ENCODE measurements at regions of chr16 and their contacts with region 1.

Region 1: DNA sequence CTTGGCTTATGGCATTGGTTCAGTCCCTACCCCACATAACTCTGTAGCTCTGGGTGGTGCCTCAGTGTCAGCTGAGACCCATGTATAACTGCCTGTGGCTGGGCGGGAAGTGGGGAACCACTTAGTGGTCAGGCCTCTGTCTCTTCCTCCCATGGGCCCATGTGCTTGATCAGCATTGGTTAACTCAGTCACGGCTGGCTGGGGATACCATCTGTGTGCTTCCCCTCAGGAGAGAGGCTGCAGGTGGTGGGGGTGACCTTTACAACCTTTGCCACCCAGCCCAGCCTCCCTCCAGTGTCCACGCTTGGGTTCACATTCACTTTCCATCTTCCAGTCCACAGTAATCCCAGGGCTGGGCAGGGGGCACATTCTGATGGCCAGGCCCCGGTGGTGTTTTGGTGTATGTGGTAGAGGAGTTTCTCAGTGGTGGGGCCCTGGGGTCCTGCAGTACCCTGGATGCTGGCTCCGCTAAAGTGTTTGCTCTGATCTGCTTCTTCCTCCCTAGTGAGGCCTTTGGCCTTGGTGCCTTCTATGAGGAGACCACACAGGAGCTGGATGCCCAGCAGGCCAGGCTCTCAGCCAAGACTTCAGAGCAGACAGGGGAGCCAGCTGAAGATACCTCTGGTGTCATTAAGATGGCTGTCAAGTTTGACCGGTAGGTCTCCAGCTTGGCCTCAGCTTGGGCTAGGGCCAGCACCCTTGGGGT is 10.2 kb upstream of the NFATC3 start:
- DNase-seq: peak; percentile 93
- ATAC-seq: peak; percentile 86
- H3K4me3 ChIP-seq: peak overlapping the region in 4 of 5 experiments; percentile 11 to 48 (median 30)
- H3K4me3 Mint-ChIP-seq: peak overlapping the region; percentile 85
- H3K27ac ChIP-seq: peak overlapping the region; percentile 77 to 91
- H3K27ac Mint-ChIP-seq: peak overlapping the region; percentile 94
- H3K4me1 ChIP-seq: peaks cover 88 to 99% of the 10 kb centered on the region in 2 donors
- H3K4me1 Mint-ChIP-seq: peaks cover 87% of the 10 kb centered on the region
- H3K27me3 ChIP-seq: no peaks in the 10 kb centered on the region
- H3K27me3 Mint-ChIP-seq: no peaks in the 10 kb centered on the region
- CTCF ChIP-seq: no peak

Region 2: DNA sequence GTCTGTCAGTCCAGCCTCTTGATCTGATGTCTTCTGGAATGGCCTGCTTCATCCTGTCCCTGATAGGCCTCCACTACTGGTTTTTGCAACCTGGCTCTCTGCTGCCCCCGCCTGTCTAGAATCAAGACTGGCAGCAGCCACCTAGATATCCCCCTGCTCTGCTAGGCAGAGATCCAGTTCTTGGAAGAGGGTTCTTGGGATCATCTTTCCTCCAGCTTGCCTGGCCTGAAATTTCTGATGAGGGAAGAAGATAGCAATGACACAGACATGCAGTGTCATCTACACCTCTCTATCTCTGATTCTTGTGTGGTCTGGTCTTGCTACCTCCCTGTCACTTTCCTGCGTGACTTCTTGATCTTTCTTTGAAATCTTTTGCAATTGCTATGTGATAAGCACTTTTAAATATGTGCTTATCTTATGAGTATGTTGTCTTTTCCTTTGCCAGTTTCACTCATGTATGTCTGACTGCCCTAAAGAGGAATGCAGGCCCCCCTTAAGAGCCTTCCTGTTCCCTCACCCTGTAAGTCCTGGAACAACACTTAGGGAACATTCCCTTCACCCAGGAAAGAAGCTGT is 10.1 kb before region 1 on chr16:
- CTCF ChIA-PET with region 1: interaction called, 242 read pairs
- POLR2A ChIA-PET with region 1: no interaction called
- intact Hi-C with region 1: no loop called
- DNase-seq: peak; percentile 74
- ATAC-seq: peak; percentile 93
- H3K4me3 ChIP-seq: no peak overlapping the region
- H3K4me3 Mint-ChIP-seq: no peak overlapping the region
- H3K27ac ChIP-seq: no peak overlapping the region
- H3K27ac Mint-ChIP-seq: peak overlapping the region; percentile 33
- H3K4me1 ChIP-seq: peaks cover 9 to 22% of the 10 kb centered on the region in 2 donors
- H3K4me1 Mint-ChIP-seq: peaks cover 23% of the 10 kb centered on the region
- H3K27me3 ChIP-seq: no peaks in the 10 kb centered on the region
- H3K27me3 Mint-ChIP-seq: no peaks in the 10 kb centered on the region
- CTCF ChIP-seq: peak; percentile 90

Region 3: GRCh38 chr16:68093816-68094613 is 19.0 kb after region 1 on chr16:
- CTCF ChIA-PET with region 1: interaction called, 242 read pairs
- POLR2A ChIA-PET with region 1: interaction called, 8 read pairs
- intact Hi-C with region 1: no loop called
- DNase-seq: peak; percentile 51
- ATAC-seq: peak; percentile 75
- H3K4me3 ChIP-seq: no peak overlapping the region
- H3K4me3 Mint-ChIP-seq: peak overlapping the region; percentile 46
- H3K27ac ChIP-seq: peak overlapping the region; percentile 22 to 54
- H3K27ac Mint-ChIP-seq: peak overlapping the region; percentile 70
- H3K4me1 ChIP-seq: peaks cover 60 to 77% of the 10 kb centered on the region in 2 donors
- H3K4me1 Mint-ChIP-seq: peaks cover 78% of the 10 kb centered on the region
- H3K27me3 ChIP-seq: no peaks in the 10 kb centered on the region
- H3K27me3 Mint-ChIP-seq: no peaks in the 10 kb centered on the region
- CTCF ChIP-seq: peak; percentile 70

Measured in B cell (primary cell).